Activated CD4-positive, alpha-beta T cell treated with anti-CD3 and anti-CD28 coated beads, Interleukin-2, amount 10 ng/mL, durations not matched to agents 24 days and 14 days (primary cell): ENCODE measurements at regions of chr6 and their contacts with region 1.

Region 1: GRCh38 chr6:11414176-11414963 is 123.2 kb upstream of the TMEM170B start:
- DNase-seq: peak; percentile 78
- H3K4me3 Mint-ChIP-seq: no peak overlapping the region
- H3K27ac Mint-ChIP-seq: peak overlapping the region; percentile 41
- H3K4me1 Mint-ChIP-seq: peaks cover 44% of the 10 kb centered on the region
- H3K27me3 Mint-ChIP-seq: no peaks in the 10 kb centered on the region

Region 2: DNA sequence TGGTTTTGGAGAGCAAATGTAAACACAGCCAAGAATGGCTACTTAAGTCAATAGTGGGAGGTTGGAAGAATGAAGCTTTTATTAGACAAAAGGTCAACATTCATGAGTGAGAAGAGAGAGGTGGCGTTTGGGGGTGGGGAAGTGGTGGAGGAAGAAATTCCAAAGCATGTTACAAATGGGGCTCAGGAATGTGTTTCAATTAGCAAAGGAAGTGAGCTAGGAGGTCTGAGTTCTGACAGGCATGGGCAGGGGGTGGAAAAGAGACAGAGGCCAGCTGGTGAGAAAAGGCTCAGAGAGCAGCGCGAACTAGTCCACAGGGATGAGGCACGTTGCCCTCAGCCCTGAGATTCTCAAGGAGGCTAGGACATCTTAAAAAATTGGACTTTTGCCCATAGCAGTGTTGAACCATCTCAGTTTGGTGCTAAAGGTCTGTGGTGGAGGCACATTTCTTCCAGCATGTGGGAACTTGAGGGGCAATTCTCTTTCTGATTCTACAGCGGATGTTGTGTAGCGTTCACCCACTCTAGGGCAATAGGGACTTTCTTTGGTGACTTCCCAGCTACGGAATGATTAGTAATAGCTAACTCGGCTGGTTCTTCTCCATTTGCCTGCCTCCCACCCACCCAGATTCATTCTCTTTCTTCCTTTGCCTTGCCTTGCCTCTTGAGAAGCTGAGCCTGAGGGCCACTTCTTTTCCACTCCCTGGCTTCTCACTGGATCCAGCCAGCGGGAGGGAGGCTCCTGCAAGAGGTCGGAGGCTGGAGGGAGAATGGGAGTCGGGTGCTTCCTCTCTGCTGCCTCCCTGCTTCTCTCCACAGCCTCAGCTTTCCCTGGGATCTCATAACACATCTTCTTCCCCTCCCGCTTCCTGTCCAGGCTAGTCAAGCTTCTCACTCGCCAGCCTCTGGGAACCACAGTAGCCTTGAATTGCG is 136.8 kb before region 1 on chr6:
- intact Hi-C with region 1: loop called (anchors 5 kb)
- DNase-seq: no peak
- H3K4me3 Mint-ChIP-seq: peak overlapping the region; percentile 31
- H3K27ac Mint-ChIP-seq: peak overlapping the region; percentile 89
- H3K4me1 Mint-ChIP-seq: peaks cover 37% of the 10 kb centered on the region
- H3K27me3 Mint-ChIP-seq: no peaks in the 10 kb centered on the region